ENCODE measurements at regions of chr19 and their contacts with region 1.

Region 1: GRCh38 chr19:12672744-12673143 is 6.1 kb downstream of the WDR83 start:
- DNase-seq: no peak
- H3K4me3 ChIP-seq: no peak overlapping the region
- H3K27ac ChIP-seq: no peak overlapping the region
- H3K4me1 ChIP-seq: peaks cover 15% of the 10 kb centered on the region
- H3K27me3 ChIP-seq: no peaks in the 10 kb centered on the region
- CTCF ChIP-seq: no peak

Region 2: DNA sequence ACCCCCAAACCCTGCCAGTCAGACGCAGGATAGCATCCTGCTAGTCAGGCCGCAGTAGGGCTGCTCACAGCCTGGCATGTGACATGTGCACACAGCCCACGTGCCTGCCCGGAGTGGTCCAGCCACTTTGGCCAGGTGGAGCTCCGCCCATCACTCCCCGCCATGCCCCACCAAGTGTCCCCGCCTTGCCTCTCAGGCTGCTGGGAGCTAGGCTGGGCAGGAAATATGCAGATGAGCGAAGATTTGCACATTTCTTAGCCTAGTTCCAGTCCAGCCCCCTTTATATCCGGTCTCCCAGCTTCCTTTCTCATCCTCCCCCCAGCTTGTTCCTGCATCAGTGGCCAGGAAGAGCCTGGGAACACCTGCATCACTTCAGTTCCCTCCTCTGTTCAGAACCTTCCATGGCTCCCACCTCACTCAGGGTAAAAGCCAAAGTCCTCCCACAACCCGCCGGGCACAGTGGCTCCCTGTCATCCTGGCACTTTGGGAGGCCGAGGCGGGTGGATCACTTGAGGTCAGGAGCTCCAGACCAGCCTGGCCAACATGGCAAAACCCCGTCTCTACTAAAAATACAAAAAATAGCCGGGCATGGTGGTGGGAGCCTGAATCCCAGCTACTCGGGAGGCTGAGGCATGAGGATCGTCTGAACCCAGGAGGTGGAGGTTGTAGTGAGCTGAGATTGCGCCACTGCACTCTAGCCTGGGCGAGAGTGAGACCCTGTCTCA is 1408.1 kb before region 1 on chr19:
- CTCF ChIA-PET with region 1: interaction called, 13 read pairs
- POLR2A ChIA-PET with region 1: no interaction called
- intact Hi-C with region 1: no loop called
- DNase-seq: peak; percentile 90 to 94
- H3K4me3 ChIP-seq: no peak overlapping the region
- H3K27ac ChIP-seq: peak overlapping the region; percentile 62
- H3K4me1 ChIP-seq: peaks cover 24% of the 10 kb centered on the region
- H3K27me3 ChIP-seq: no peaks in the 10 kb centered on the region
- CTCF ChIP-seq: no peak

Region 3: GRCh38 chr19:12208221-12208620 is 464.5 kb before region 1 on chr19:
- CTCF ChIA-PET with region 1: no interaction called
- POLR2A ChIA-PET with region 1: no interaction called
- intact Hi-C with region 1: no loop called
- DNase-seq: no peak
- H3K4me3 ChIP-seq: no peak overlapping the region
- H3K27ac ChIP-seq: no peak overlapping the region
- H3K4me1 ChIP-seq: no peaks in the 10 kb centered on the region
- H3K27me3 ChIP-seq: no peaks in the 10 kb centered on the region
- CTCF ChIP-seq: no peak

Region 4: DNA sequence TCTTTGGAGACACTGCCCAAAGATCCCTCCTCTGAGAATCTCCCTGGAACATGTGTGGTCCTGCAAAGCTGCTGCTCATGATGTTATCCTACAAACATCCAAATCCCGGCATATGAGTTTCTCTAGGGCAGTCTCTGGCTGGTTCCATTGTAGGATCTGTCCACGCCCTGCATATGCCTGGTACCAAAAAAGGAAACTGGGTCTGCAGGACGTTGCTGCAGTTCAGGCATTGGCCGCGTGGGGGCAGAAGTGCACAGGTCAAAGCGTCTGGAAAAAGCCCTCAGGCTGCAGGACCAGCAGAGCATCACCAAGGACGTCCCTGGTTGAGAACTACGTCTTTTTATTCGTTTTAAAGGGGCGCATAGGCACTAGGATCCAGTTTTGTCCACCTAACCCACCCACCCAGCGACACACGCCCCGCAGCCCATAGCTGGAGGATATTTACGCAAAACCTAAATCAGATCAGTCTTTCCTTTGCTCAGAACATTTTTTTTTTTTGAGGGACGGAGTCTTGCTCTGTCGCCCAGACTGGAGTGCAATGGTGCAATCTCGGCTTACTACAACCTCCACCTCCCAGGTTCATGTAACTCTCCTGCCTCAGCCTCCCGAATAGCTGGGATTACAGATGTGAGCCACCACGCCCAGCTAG is 108.6 kb before region 1 on chr19:
- CTCF ChIA-PET with region 1: no interaction called
- POLR2A ChIA-PET with region 1: no interaction called
- intact Hi-C with region 1: loop called (anchors 2 kb)
- DNase-seq: peak; percentile 75 to 86
- H3K4me3 ChIP-seq: no peak overlapping the region
- H3K27ac ChIP-seq: no peak overlapping the region
- H3K4me1 ChIP-seq: no peaks in the 10 kb centered on the region
- H3K27me3 ChIP-seq: no peaks in the 10 kb centered on the region
- CTCF ChIP-seq: peak; percentile 99

Region 5: DNA sequence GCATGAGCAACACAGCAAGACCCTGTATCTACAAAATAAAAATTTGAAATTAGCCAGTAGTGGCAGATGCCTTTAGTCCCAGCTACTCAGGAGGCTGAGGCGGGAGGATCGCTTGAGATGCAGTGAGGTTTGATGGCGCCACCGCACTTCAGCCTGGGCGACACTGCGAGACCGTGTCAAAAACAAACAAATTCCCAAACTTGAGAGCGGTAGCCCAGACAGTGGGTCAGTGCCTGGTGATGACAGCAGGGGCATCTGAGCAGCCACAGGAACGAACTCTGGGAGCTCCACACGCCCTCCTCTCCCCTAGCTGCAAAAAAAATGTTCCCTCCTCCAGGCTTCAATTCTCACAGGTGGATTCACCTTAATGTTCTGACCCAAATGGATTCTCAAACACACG is 76.3 kb before region 1 on chr19:
- CTCF ChIA-PET with region 1: no interaction called
- POLR2A ChIA-PET with region 1: no interaction called
- intact Hi-C with region 1: no loop called
- DNase-seq: no peak
- H3K4me3 ChIP-seq: no peak overlapping the region
- H3K27ac ChIP-seq: no peak overlapping the region
- H3K4me1 ChIP-seq: no peaks in the 10 kb centered on the region
- H3K27me3 ChIP-seq: no peaks in the 10 kb centered on the region
- CTCF ChIP-seq: no peak

Region 6: GRCh38 chr19:12696366-12697335 is 23.9 kb after region 1 on chr19 and contains the start of gene FBXW9:
- CTCF ChIA-PET with region 1: interaction called, 13 read pairs
- POLR2A ChIA-PET with region 1: no interaction called
- intact Hi-C with region 1: no loop called
- DNase-seq: peak; percentile 90 to 91
- H3K4me3 ChIP-seq: peak within 1 kb of the TSS; percentile 72
- H3K27ac ChIP-seq: peak within 1 kb of the TSS; percentile 48
- H3K4me1 ChIP-seq: peaks cover 8% of the 10 kb centered on the region; the same call in 1 of the 2 replicates
- H3K27me3 ChIP-seq: no peaks in the 10 kb centered on the region
- CTCF ChIP-seq: no peak
- total RNA-seq, gene FBXW9: 21.0 and 21.9 TPM in 2 replicates

Measured in PC-9 (cell line).